Caco-2 (cell line): ENCODE measurements at regions of chr11 and their contacts with region 1.

Region 1: GRCh38 chr11:9506489-9507276 is 45.9 kb downstream of the ZNF143 start:
- DNase-seq: peak; percentile 78 to 86
- H3K4me3 ChIP-seq: no peak overlapping the region
- H3K4me3 Mint-ChIP-seq: no peak overlapping the region
- H3K27ac Mint-ChIP-seq: peak overlapping the region; percentile 75
- H3K4me1 ChIP-seq: peaks cover 46% of the 10 kb centered on the region
- H3K4me1 Mint-ChIP-seq: peaks cover 29% of the 10 kb centered on the region
- H3K27me3 ChIP-seq: no peaks in the 10 kb centered on the region
- H3K27me3 Mint-ChIP-seq: no peaks in the 10 kb centered on the region
- CTCF ChIP-seq: peak; percentile 81 to 86

Region 2: GRCh38 chr11:9015677-9016076 is 491.0 kb before region 1 on chr11:
- CTCF ChIA-PET with region 1: interaction called, 8 read pairs
- POLR2A ChIA-PET with region 1: no interaction called
- intact Hi-C with region 1: loop called (anchors 1 kb)
- DNase-seq: peak; percentile 74
- H3K4me3 ChIP-seq: no peak overlapping the region
- H3K4me3 Mint-ChIP-seq: no peak overlapping the region
- H3K27ac Mint-ChIP-seq: no peak overlapping the region
- H3K4me1 ChIP-seq: no peaks in the 10 kb centered on the region
- H3K4me1 Mint-ChIP-seq: no peaks in the 10 kb centered on the region
- H3K27me3 ChIP-seq: no peaks in the 10 kb centered on the region
- H3K27me3 Mint-ChIP-seq: peaks cover 2% of the 10 kb centered on the region
- CTCF ChIP-seq: peak; percentile 72 to 88

Region 3: GRCh38 chr11:9208726-9209501 is 297.8 kb before region 1 on chr11:
- CTCF ChIA-PET with region 1: interaction called, 5 read pairs
- POLR2A ChIA-PET with region 1: no interaction called
- intact Hi-C with region 1: loop called (anchors 2 kb)
- DNase-seq: no peak
- H3K4me3 ChIP-seq: no peak overlapping the region
- H3K4me3 Mint-ChIP-seq: no peak overlapping the region
- H3K27ac Mint-ChIP-seq: peak overlapping the region; percentile 8
- H3K4me1 ChIP-seq: peaks cover 35% of the 10 kb centered on the region
- H3K4me1 Mint-ChIP-seq: peaks cover 37% of the 10 kb centered on the region
- H3K27me3 ChIP-seq: no peaks in the 10 kb centered on the region
- H3K27me3 Mint-ChIP-seq: no peaks in the 10 kb centered on the region
- CTCF ChIP-seq: no peak

Region 4: GRCh38 chr11:9314291-9315036 is 192.2 kb before region 1 on chr11 and contains the start of gene TMEM41B:
- CTCF ChIA-PET with region 1: no interaction called
- POLR2A ChIA-PET with region 1: interaction called, 7 read pairs
- intact Hi-C with region 1: loop called (anchors 1 kb)
- DNase-seq: peak; percentile 98 to 99
- H3K4me3 ChIP-seq: peak within 1 kb of the TSS; percentile 98
- H3K4me3 Mint-ChIP-seq: peak within 1 kb of the TSS; percentile 87
- H3K27ac Mint-ChIP-seq: peak within 1 kb of the TSS; percentile 99
- H3K4me1 ChIP-seq: peaks cover 37% of the 10 kb centered on the region
- H3K4me1 Mint-ChIP-seq: peaks cover 24% of the 10 kb centered on the region
- H3K27me3 ChIP-seq: no peaks in the 10 kb centered on the region
- H3K27me3 Mint-ChIP-seq: no peaks in the 10 kb centered on the region
- CTCF ChIP-seq: peak in 1 of 2 experiments; percentile 16
- total RNA-seq, gene TMEM41B: 103 and 110 TPM in 2 replicates

Region 5: GRCh38 chr11:9438611-9439010 is 68.1 kb before region 1 on chr11:
- CTCF ChIA-PET with region 1: interaction called, 8 read pairs
- POLR2A ChIA-PET with region 1: no interaction called
- intact Hi-C with region 1: loop called (anchors 2 kb)
- DNase-seq: no peak
- H3K4me3 ChIP-seq: no peak overlapping the region
- H3K4me3 Mint-ChIP-seq: no peak overlapping the region
- H3K27ac Mint-ChIP-seq: no peak overlapping the region
- H3K4me1 ChIP-seq: no peaks in the 10 kb centered on the region
- H3K4me1 Mint-ChIP-seq: no peaks in the 10 kb centered on the region
- H3K27me3 ChIP-seq: no peaks in the 10 kb centered on the region
- H3K27me3 Mint-ChIP-seq: no peaks in the 10 kb centered on the region
- CTCF ChIP-seq: no peak

Region 6: DNA sequence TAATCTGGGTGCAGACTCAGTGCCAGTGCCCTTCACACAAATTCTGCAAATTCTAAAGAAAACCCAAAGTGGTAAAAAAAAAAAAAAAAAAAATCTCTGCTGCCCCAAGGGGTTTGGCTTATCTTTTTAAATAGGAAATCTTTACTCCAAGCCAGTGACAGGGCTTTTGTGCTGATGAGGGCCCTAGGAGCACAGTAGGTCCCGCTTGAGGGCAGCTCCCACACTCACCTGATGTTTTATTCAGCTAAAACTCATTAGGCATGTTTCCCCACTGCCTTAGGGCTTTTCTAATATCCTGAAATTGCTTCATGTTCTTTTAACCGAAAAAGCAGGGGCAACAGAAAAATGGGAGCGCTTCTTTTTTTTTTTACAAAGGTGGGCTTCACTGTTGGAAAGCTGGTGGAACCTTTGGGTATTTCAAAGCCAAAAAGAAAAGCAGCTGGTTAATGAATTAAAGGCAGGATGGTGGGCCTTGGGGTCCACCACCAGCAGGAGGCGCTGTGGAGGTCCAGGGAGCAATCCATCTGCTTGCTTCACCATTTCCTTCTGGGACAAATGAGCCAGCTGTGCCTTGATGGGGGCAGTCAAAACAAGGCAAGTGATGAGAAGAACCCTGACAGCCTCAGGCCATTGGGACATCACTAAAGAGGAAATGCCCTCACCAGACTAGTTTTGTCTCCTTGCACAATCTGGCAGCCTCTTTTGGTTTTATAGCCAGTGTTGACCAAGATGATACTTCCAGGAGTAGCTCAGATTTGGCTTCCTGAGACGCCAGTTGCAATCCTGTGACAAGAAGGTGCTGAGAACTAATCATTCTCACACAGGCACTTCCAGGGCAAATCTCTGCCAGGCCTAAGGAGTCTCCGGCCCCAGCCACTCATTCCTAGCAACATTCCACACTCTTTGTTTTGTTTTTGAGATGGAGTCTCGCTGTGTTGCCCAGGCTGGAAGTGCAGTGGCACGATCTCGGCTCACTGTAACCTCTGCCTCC is 28.4 kb after region 1 on chr11:
- CTCF ChIA-PET with region 1: interaction called, 4 read pairs
- POLR2A ChIA-PET with region 1: no interaction called
- intact Hi-C with region 1: loop called (anchors 1 kb)
- DNase-seq: peak; percentile 59 to 76
- H3K4me3 ChIP-seq: no peak overlapping the region
- H3K4me3 Mint-ChIP-seq: no peak overlapping the region
- H3K27ac Mint-ChIP-seq: peak overlapping the region; percentile 14
- H3K4me1 ChIP-seq: peaks cover 44% of the 10 kb centered on the region
- H3K4me1 Mint-ChIP-seq: peaks cover 20% of the 10 kb centered on the region
- H3K27me3 ChIP-seq: no peaks in the 10 kb centered on the region
- H3K27me3 Mint-ChIP-seq: no peaks in the 10 kb centered on the region
- CTCF ChIP-seq: peak; percentile 74 to 80

Region 7: DNA sequence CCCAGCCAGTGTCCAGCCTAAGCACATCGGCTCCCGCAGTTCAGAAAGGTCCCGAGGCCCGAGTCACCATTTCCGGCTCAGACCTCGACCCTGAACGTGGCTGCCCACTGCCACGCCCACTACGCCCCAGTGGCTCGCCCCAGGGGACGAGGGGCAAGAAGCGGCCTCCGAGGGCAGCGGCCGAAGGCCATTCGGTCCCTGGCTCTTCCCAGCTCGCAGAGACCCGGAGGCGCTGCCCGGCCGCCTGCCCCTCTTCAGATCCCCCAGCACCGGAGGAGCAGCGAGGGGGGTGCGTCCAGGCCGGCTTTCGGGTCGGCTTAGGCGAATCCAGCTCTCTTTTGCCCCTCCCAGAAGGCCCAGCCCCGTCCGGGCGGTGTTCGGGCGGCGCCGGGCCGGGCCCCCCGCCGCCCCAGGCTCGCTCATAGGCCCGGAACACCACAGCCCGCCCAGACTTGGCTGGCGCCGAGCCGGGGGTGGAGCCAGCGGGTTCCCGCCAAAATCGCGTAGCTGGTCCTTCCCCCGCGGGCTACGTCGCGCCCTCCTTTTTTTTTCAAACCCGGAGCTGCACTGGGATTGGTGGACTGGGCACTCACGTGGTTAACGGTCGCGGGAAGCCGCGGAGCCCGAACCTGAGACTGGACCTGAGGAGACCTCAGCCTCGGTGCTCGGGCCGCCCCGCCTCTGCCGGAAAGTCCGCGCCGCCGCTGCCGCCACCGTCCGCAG is 66.5 kb after region 1 on chr11 and contains the start of gene WEE1:
- CTCF ChIA-PET with region 1: interaction called, 16 read pairs
- POLR2A ChIA-PET with region 1: interaction called, 13 read pairs
- intact Hi-C with region 1: no loop called
- DNase-seq: peak; percentile 99 to 100
- H3K4me3 ChIP-seq: peak within 1 kb of the TSS; percentile 87
- H3K4me3 Mint-ChIP-seq: peak within 1 kb of the TSS; percentile 94
- H3K27ac Mint-ChIP-seq: peak within 1 kb of the TSS; percentile 100
- H3K4me1 ChIP-seq: peaks cover 40% of the 10 kb centered on the region
- H3K4me1 Mint-ChIP-seq: peaks cover 37% of the 10 kb centered on the region
- H3K27me3 ChIP-seq: no peaks in the 10 kb centered on the region
- H3K27me3 Mint-ChIP-seq: no peaks in the 10 kb centered on the region
- CTCF ChIP-seq: no peak
- total RNA-seq, gene WEE1: 108 and 116 TPM in 2 replicates

Region 8: GRCh38 chr11:9733212-9733611 is 226.5 kb after region 1 on chr11:
- CTCF ChIA-PET with region 1: no interaction called
- POLR2A ChIA-PET with region 1: no interaction called
- intact Hi-C with region 1: no loop called
- DNase-seq: no peak
- H3K4me3 ChIP-seq: no peak overlapping the region
- H3K4me3 Mint-ChIP-seq: no peak overlapping the region
- H3K27ac Mint-ChIP-seq: no peak overlapping the region
- H3K4me1 ChIP-seq: no peaks in the 10 kb centered on the region
- H3K4me1 Mint-ChIP-seq: peaks cover 6% of the 10 kb centered on the region
- H3K27me3 ChIP-seq: no peaks in the 10 kb centered on the region
- H3K27me3 Mint-ChIP-seq: no peaks in the 10 kb centered on the region
- CTCF ChIP-seq: no peak